ENCODE measurements at regions of chr6 and their contacts with region 1.

Region 1: DNA sequence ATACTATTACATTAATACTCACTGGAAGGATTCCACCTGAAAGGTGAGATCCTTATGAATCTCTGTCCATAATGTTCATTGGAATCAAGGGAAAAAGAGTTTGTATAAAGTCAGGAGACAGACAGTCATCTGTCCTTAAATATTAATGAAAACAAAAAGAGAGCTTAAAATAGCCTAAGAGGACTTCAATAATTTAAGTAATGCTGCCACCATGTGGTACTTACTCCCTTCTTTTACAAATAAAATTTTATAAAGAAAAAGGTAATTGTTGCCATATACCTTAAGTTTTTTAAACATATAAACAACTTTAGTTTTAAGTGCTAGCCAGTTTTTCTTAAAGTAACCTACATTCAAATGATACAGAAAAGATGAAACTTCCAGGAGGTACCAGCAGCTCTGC is 5.1 kb downstream of the BLOC1S5 start:
- DNase-seq: no peak
- H3K4me3 ChIP-seq: no peak overlapping the region
- H3K27me3 ChIP-seq: no peaks in the 10 kb centered on the region
- CTCF ChIP-seq: peak; percentile 31

Region 2: GRCh38 chr6:7846966-7847818 is 211.9 kb before region 1 on chr6:
- CTCF ChIA-PET with region 1: no interaction called
- POLR2A ChIA-PET with region 1: no interaction called
- DNase-seq: no peak
- H3K4me3 ChIP-seq: no peak overlapping the region
- H3K27me3 ChIP-seq: no peaks in the 10 kb centered on the region
- CTCF ChIP-seq: no peak

Region 3: DNA sequence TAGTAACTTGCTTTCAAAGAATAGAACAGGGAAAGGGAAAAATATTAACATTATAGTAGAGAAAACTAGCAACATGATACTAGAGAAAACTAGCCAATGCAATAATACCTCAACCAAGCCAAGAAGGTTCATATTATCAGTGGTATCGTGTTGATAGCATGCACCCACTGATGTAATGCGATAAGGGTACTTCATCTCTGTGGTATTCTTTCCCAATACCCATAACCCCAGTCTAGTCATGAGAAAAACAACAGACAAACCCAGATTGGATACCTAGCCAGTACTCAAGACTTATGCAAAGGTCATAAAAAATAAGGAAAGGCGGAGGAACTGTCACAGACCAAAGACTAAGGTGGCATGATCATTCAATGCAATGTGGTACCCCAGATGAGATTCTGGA is 15.9 kb before region 1 on chr6:
- CTCF ChIA-PET with region 1: interaction called, 10 read pairs
- POLR2A ChIA-PET with region 1: no interaction called
- DNase-seq: no peak
- H3K4me3 ChIP-seq: no peak overlapping the region
- H3K27me3 ChIP-seq: no peaks in the 10 kb centered on the region
- CTCF ChIP-seq: no peak

Region 4: DNA sequence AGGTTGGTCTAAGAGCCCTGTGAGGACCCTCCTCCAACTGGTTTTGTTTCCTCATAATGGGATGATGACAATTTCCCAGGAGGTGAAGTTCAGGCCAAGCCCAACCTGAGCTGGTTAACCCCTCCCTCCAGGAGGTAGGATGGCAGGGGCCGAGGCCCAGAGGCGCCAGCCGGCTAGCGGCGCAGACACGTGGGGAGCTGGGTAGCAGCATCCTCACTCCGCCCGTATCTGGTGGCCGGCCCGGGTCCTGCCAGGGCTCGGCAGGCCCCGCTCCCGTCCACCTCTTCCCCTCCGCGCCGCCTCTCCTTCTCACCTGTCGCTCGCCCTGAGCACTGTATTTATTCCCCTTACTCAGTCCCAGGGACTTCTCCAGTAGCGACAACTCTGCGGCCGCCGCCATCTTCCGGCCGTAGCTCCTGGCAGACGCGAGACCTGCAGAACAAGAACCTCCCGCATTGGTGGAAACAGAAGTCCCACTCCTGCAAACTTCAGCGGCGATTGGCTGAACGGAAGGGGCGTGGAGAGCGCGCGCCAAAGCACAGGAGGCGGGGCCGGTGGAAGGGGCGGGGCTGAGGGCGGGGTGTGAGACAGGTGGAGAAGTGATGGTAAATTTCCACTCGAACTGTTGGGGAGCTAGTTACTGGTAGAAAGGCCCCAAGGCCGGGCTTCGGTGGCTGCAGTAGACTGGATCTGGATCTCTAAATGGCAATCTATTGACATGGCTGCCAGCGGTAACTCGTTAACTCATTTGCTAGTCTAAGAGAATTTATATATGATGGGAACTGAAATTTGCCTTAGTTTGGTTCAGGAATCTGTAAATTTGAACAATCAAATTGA is 43.2 kb after region 1 on chr6 and contains the start of gene EEF1E1:
- CTCF ChIA-PET with region 1: no interaction called
- POLR2A ChIA-PET with region 1: no interaction called
- DNase-seq: peak; percentile 56
- H3K4me3 ChIP-seq: peak within 1 kb of the TSS; percentile 74
- H3K27me3 ChIP-seq: no peaks in the 10 kb centered on the region
- CTCF ChIP-seq: 0 out of 2 replicates have a peak, but pooled peaks have one; percentile 5
- polyA plus RNA-seq, gene EEF1E1: 26.4 and 44.9 TPM in 2 replicates

Measured in BJ (cell line).